Naive thymus-derived CD4-positive, alpha-beta T cell (primary cell): ENCODE measurements at regions of chr11 and their contacts with region 1.

Region 1: GRCh38 chr11:73376160-73376802 is at the start of gene RELT:
- DNase-seq: peak; percentile 84 to 99 (median 96)
- ATAC-seq: peak; percentile 93
- H3K4me3 ChIP-seq: peak within 1 kb of the TSS; percentile 84
- H3K4me3 Mint-ChIP-seq: peak within 1 kb of the TSS; percentile 86 to 99 (median 92)
- H3K27ac ChIP-seq: peak within 1 kb of the TSS; percentile 92
- H3K27ac Mint-ChIP-seq: peak within 1 kb of the TSS; percentile 87 to 99 (median 95)
- H3K4me1 ChIP-seq: peaks cover 12 to 22% of the 10 kb centered on the region in 2 donors
- H3K4me1 Mint-ChIP-seq: peaks cover 32 to 49% (median 41%) of the 10 kb centered on the region in 7 donors
- H3K27me3 ChIP-seq: no peaks in the 10 kb centered on the region
- H3K27me3 Mint-ChIP-seq: no peaks in the 10 kb centered on the region
- total RNA-seq, gene RELT: 11.9 to 275 (median 28.4) TPM

Region 2: GRCh38 chr11:73350908-73351636 is 25.2 kb before region 1 on chr11:
- CTCF ChIA-PET with region 1: interaction called, 15 read pairs
- POLR2A ChIA-PET with region 1: interaction called, 3 read pairs
- intact Hi-C with region 1: loop called (anchors 1 kb)
- DNase-seq: peak; percentile 45 to 78 (median 68)
- ATAC-seq: peak; percentile 97
- H3K4me3 ChIP-seq: no peak overlapping the region
- H3K4me3 Mint-ChIP-seq: no peak overlapping the region
- H3K27ac ChIP-seq: no peak overlapping the region
- H3K27ac Mint-ChIP-seq: peak overlapping the region in 6 of 9 donors; percentile 45 to 83 (median 54)
- H3K4me1 ChIP-seq: no peaks in the 10 kb centered on the region
- H3K4me1 Mint-ChIP-seq: peaks cover 0 to 19% (median 3%) of the 10 kb centered on the region in 7 donors
- H3K27me3 ChIP-seq: no peaks in the 10 kb centered on the region
- H3K27me3 Mint-ChIP-seq: peaks cover 0 to 10% (median 5%) of the 10 kb centered on the region in 5 donors

Region 3: GRCh38 chr11:73366265-73366610 is 10.0 kb before region 1 on chr11:
- CTCF ChIA-PET with region 1: interaction called, 3 read pairs
- POLR2A ChIA-PET with region 1: interaction called, 6 read pairs
- intact Hi-C with region 1: loop called (anchors 1 kb)
- DNase-seq: peak in 7 of 9 donors; percentile 49 to 79 (median 66)
- ATAC-seq: peak; percentile 87
- H3K4me3 ChIP-seq: peak overlapping the region; percentile 42
- H3K4me3 Mint-ChIP-seq: peak overlapping the region; percentile 48 to 82 (median 66)
- H3K27ac ChIP-seq: peak overlapping the region; percentile 78
- H3K27ac Mint-ChIP-seq: peak overlapping the region; percentile 88 to 100 (median 98)
- H3K4me1 ChIP-seq: peaks cover 30% of the 10 kb centered on the region in 2 donors
- H3K4me1 Mint-ChIP-seq: peaks cover 14 to 39% (median 20%) of the 10 kb centered on the region in 7 donors
- H3K27me3 ChIP-seq: no peaks in the 10 kb centered on the region
- H3K27me3 Mint-ChIP-seq: no peaks in the 10 kb centered on the region

Region 4: DNA sequence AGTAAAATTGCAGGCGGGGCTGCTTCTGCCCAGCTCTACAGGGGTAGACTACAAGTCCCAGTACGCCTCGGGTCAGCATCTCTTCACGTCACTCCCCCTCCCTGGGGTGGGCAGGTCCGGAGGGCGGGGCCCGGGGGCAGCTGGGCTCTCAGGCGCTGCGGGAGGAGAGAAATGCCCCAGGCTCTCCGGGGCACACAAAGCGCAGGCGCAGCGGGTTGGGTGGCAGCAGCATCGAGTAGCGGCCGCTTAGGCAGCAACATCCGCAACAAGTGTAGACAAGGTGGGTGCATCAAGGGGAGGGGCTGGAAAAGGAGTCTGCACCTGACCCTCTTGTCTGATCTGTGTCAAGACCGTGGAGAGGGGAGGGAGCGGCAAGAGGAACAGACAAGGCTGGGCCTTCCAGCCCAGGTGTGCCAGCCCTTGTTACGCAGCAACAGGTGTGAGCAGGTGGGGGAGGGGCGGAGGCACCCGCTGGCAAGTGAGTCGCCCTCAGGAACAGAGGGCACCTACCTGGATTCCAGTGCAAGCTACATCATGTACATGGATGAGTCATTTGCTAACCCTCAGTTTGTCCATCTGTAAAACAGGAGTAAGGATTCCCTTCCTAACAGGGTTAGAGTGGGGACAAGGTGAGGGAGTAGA is 271.3 kb after region 1 on chr11:
- CTCF ChIA-PET with region 1: no interaction called
- POLR2A ChIA-PET with region 1: no interaction called
- intact Hi-C with region 1: loop called in 1 of 2 experiments (anchors 1 kb)
- DNase-seq: peak; percentile 81 to 96 (median 94)
- ATAC-seq: peak; percentile 100
- H3K4me3 ChIP-seq: peak overlapping the region; percentile 62
- H3K4me3 Mint-ChIP-seq: peak overlapping the region; percentile 71 to 96 (median 92)
- H3K27ac ChIP-seq: peak overlapping the region; percentile 71
- H3K27ac Mint-ChIP-seq: peak overlapping the region; percentile 83 to 98 (median 94)
- H3K4me1 ChIP-seq: peaks cover 7 to 15% of the 10 kb centered on the region in 2 donors
- H3K4me1 Mint-ChIP-seq: peaks cover 10 to 41% (median 34%) of the 10 kb centered on the region in 7 donors
- H3K27me3 ChIP-seq: no peaks in the 10 kb centered on the region
- H3K27me3 Mint-ChIP-seq: peaks cover 0 to 8% (median 0%) of the 10 kb centered on the region in 5 donors

Region 5: DNA sequence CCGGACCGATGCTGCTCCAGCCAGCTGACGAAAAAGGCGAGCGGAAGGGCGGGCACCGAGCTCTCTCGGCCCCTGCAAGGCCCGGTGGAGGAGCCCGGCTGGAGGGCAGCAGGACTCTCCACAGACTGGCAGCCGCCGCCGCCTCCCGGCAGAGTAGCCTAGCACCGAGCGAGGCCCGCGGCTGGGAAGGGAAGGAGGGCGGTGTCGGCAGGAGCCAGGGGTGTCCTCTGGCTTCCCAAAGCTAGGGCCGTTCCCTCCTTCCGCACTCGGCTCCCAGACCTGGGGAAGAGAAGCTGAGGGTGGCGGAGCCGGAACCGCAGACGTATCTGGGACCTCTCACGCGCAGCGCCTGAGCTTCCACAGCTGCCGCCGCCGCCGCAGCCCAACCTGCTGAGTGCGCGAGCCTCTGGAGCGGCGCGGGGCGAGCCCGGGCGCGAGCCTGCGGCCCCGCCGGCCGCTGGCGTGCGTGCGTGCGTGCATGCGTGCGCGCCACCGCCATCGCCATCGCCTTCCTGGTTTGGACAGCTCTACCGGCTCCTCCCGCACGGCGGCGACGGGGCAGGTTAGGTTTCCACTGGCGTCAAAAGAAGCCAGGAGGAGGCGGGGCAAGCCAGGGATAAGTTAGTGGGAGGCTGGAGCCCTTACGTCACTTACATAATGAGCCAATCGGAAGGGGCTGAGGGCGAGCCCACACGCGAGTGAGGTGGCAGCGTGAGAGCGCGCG is 384.6 kb after region 1 on chr11 and contains the start of gene RAB6A:
- CTCF ChIA-PET with region 1: no interaction called
- POLR2A ChIA-PET with region 1: no interaction called
- intact Hi-C with region 1: loop called in 1 of 2 experiments (anchors 10 kb)
- DNase-seq: peak; percentile 94 to 100 (median 100)
- ATAC-seq: peak; percentile 94
- H3K4me3 ChIP-seq: peak within 1 kb of the TSS; percentile 87
- H3K4me3 Mint-ChIP-seq: peak within 1 kb of the TSS; percentile 89 to 98 (median 94)
- H3K27ac ChIP-seq: peak within 1 kb of the TSS; percentile 89
- H3K27ac Mint-ChIP-seq: peak within 1 kb of the TSS; percentile 86 to 98 (median 92)
- H3K4me1 ChIP-seq: peaks cover 14 to 15% of the 10 kb centered on the region in 2 donors
- H3K4me1 Mint-ChIP-seq: peaks cover 19 to 40% (median 32%) of the 10 kb centered on the region in 7 donors
- H3K27me3 ChIP-seq: no peaks in the 10 kb centered on the region
- H3K27me3 Mint-ChIP-seq: peaks cover 0 to 5% (median 0%) of the 10 kb centered on the region in 5 donors
- total RNA-seq, gene RAB6A: 54.9 to 94.5 (median 80.0) TPM